ENCODE measurements at regions of chr11 and their contacts with region 1.

Region 1: DNA sequence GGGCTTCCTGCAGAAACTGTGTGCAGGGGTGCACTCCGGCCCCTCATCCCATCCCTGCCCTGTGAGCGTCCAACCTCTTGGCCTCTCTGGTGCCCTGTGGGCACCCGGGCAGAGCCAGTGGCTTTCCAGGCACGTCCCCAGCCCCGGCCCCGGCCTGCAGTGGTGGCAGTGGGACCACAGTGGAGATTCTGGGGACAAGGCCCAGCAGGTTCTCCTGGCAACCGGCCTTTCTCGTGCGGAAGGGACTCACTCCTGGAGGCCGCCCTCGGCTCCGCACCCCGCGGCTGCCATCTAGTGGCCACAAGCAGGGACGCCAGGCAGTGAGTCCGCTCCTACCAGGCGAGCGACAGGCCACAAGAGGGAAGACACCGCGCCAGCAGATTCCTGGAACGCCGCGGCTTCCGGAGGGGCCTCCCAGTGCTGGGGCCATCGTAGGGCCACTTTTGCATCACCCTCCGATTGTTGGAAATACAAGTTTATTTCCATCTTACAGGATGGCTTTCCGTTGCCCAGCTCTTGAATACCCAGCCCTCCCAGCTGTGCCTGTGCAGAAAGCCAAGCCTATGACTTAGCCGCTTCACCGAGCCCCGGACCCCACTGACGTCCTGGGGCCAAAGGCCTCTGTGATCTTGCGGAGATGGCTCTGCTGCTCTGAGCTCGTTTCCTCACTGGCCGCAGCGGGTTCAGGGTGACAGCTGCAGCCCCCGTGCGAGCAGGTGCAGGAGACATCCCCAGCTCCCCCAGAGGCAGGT is 357.3 kb downstream of the CTTN start:
- DNase-seq: peak; percentile 75
- ATAC-seq: peak; percentile 95
- H3K4me3 Mint-ChIP-seq: no peak overlapping the region
- H3K27ac Mint-ChIP-seq: no peak overlapping the region
- H3K4me1 Mint-ChIP-seq: no peaks in the 10 kb centered on the region
- H3K27me3 Mint-ChIP-seq: peaks cover 7% of the 10 kb centered on the region
- CTCF ChIP-seq: peak; percentile 91

Region 2: GRCh38 chr11:70467201-70468085 is 288.1 kb before region 1 on chr11:
- CTCF ChIA-PET with region 1: interaction called, 13 read pairs
- POLR2A ChIA-PET with region 1: no interaction called
- intact Hi-C with region 1: loop called (anchors 2 kb)
- DNase-seq: peak; percentile 78
- ATAC-seq: peak; percentile 67
- H3K4me3 Mint-ChIP-seq: no peak overlapping the region
- H3K27ac Mint-ChIP-seq: no peak overlapping the region
- H3K4me1 Mint-ChIP-seq: no peaks in the 10 kb centered on the region
- H3K27me3 Mint-ChIP-seq: peaks cover 8% of the 10 kb centered on the region
- CTCF ChIP-seq: peak; percentile 87

Region 3: DNA sequence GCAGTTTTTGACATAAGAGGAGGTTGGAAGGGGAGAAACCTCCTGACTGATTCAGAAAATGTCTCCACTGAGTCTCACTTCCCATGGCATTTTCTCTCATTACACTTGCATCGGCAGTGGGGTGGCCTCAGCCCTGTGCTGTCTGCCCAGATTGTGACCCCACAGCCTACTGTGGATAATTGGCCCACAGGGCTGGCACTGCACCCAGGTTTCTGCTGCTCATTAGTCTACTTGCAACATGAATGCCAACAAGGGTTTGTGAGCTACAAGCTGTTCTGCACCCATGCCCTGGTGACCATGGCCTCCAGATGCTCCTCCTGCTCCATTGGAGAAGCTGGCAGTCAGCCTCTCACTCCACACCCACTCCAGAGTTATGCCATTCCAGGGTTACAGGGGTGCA is 61.2 kb before region 1 on chr11:
- CTCF ChIA-PET with region 1: no interaction called
- POLR2A ChIA-PET with region 1: no interaction called
- intact Hi-C with region 1: no loop called
- DNase-seq: no peak
- ATAC-seq: no peak
- H3K4me3 Mint-ChIP-seq: no peak overlapping the region
- H3K27ac Mint-ChIP-seq: no peak overlapping the region
- H3K4me1 Mint-ChIP-seq: no peaks in the 10 kb centered on the region
- H3K27me3 Mint-ChIP-seq: peaks cover 5% of the 10 kb centered on the region
- CTCF ChIP-seq: no peak

Region 4: DNA sequence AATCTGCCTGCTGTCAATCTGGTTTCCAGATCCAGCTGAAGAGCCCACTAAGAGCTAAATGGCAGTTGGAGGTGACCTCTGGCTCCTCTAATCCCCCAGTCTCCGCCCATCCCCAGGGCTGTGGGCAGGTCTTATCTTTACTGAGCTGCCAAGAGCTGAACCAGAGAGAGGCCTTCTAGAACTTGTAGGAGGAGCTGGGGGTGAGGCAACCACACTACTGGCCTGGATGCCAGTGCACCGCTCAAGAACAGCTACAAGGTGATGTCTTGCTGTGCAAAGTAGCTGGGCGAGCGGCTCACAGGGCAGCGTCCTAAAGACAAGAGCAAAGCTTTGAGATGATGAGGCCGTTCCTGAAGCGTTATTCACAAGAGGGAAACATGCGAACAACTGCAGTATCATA is 17.4 kb after region 1 on chr11:
- CTCF ChIA-PET with region 1: no interaction called
- POLR2A ChIA-PET with region 1: no interaction called
- intact Hi-C with region 1: no loop called
- DNase-seq: no peak
- ATAC-seq: no peak
- H3K4me3 Mint-ChIP-seq: no peak overlapping the region
- H3K27ac Mint-ChIP-seq: no peak overlapping the region
- H3K4me1 Mint-ChIP-seq: no peaks in the 10 kb centered on the region
- H3K27me3 Mint-ChIP-seq: peaks cover 1% of the 10 kb centered on the region
- CTCF ChIP-seq: no peak